GM10248 (cell line): ENCODE measurements at regions of chr17 and their contacts with region 1.

Region 1: DNA sequence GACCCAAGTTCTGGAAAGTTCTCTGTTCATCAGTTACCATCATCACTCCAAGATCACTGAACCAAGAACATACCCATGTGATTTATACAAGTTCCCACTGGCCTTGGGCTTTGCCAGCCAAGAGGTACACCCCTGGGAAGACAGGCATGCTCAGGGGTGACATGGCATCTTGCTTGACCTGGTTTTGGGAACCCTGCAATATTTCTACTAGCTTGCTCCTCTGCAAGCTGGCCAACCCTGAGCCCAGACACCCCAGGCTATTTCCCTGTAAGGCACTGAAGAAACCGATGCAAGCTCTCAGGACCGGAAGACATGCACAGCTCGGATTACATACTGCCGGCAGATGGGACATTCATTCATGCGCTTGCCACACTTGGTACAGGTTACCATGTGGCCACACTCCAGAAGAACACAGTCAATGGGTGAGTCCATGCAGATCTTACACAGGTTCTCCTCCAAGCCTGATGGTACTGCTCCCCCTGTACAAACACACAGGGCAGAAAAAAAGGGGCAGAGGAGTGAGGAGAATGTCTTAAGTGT is 31.4 kb downstream of the LIG3 start:
- DNase-seq: no peak
- CTCF ChIP-seq: no peak

Region 2: DNA sequence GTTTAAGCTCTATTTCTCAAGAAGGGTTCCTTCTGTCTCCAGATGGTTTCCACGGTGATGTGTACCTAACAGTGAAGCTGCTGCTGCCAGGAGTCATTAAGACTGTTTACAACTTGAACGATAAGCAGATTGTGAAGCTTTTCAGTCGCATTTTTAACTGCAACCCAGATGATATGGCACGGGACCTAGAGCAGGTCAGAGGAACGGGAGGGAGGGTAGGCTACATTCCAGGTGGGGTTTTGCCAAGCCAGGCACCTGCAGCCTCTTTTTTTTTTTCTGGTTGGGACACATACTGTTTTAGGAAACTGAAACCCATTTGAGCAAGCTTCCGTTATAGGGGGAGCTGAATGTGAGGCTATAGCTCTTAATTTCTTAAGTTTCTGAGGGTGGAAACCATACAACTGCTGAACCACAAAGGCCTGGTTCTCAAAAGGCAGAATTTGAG is 20.8 kb before region 1 on chr17:
- CTCF ChIA-PET with region 1: interaction called, 10 read pairs
- POLR2A ChIA-PET with region 1: no interaction called
- DNase-seq: no peak
- CTCF ChIP-seq: no peak

Region 3: DNA sequence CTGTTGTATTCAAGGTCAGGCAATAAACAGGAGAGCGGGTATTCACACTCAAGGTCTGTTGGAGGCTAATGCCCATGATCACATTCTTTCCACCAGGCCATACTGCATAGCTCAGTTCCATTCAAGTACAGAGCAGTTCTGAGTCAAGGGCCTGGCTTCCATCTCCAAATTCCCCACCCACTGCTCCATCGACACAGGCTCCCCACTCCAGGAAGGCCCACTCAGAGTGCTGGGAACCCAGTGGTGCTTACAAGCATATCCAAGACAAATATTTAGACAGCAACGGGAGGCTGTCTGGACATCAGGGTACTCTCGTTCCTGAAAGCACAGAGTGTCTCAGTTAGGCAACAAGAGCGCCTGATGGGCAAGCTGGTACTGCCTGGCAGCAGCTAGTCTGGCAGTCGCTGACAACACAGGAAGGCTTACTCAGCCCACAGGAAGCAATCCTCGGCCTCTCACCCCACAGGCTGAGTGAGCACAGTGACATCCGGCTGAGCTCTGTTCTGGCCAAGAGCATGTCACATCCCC is 10.9 kb after region 1 on chr17:
- CTCF ChIA-PET with region 1: interaction called, 10 read pairs
- POLR2A ChIA-PET with region 1: no interaction called
- DNase-seq: peak; percentile 58
- CTCF ChIP-seq: no peak

Region 4: DNA sequence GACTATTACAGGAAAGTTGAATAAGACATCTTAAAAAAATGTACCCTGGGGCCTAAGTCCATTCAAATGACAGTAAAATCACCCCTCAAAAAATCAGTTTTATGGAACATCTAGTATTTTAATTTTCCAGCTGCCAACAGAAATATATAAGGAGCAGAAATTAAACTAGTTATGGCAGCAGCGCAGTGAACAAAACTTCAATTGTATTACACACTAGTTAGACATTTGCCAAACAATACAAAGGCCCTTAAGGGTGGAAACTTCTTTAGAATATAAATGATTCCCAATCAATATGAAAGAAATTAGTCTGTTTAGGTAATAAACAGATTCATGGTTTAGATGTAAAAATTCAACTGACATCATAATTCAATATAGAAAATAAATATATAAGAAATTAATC is 69.9 kb after region 1 on chr17:
- CTCF ChIA-PET with region 1: no interaction called
- POLR2A ChIA-PET with region 1: no interaction called
- DNase-seq: no peak
- CTCF ChIP-seq: no peak